ENCODE measurements at regions of chr11 and their contacts with region 1.

Region 1: GRCh38 chr11:6635082-6635932 is 16.1 kb upstream of the TPP1 start:
- DNase-seq: no peak
- ATAC-seq: no peak
- H3K4me3 ChIP-seq: no peak overlapping the region
- H3K27ac ChIP-seq: peak overlapping the region in 1 of 2 experiments; percentile 28; a peak in 1 of 6 replicates
- H3K4me1 ChIP-seq: peaks cover 5% of the 10 kb centered on the region; the same call in 1 of the 3 replicates
- CTCF ChIP-seq: no peak
- EP300 ChIP-seq: no peak
- POLR2A ChIP-seq: no peak
- RAD21 ChIP-seq: no peak

Region 2: DNA sequence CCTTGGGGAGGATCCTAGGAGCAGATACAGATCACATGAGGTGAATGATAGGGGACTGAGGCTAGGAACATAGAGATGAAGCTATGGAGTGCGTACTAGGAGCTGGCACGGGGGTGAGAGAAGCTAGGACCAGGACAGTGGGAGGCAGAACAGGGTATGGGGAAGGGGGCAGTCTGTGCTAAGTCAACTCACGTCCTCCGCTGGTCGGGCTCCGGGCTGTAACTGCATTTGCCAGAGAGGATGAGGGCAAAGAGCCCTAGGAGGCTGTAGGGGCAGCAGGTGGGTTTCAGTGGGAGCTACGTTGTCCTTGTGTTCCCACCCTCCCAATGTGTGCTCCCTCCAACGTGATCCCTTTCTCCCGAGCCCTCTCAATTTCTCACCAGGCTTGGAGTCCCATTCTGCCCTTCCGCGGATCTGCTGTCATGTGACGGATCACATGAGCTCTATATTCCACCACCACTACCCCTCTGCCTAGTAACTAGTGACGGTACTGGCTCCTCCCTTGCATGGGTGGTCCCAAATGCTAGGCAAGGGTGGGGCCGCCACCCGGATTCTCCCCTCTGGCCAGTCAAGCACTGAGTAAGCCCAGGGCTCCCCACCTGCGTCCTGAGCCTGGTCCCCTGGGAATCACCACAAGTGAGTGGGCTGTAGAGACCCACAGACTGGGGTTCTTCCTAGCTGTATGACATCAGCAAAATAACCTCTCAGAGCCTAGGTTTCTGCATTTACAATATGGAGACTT is 16.1 kb before region 1 on chr11 and contains the start of gene TPP1:
- CTCF ChIA-PET with region 1: interaction called, 15 read pairs
- POLR2A ChIA-PET with region 1: no interaction called
- DNase-seq: peak; percentile 94 to 99
- ATAC-seq: peak; percentile 92 to 99
- H3K4me3 ChIP-seq: peak within 1 kb of the TSS; percentile 70
- H3K27ac ChIP-seq: peak within 1 kb of the TSS; percentile 80 to 90
- H3K4me1 ChIP-seq: peaks cover 12% of the 10 kb centered on the region; the same call in 2 of the 3 replicates
- CTCF ChIP-seq: no peak
- EP300 ChIP-seq: no peak
- POLR2A ChIP-seq: peak; percentile 69
- RAD21 ChIP-seq: no peak
- polyA plus RNA-seq, gene TPP1: 53.2 and 63.0 TPM in 2 replicates

Region 3: GRCh38 chr11:6778518-6778917 is 143.2 kb after region 1 on chr11:
- CTCF ChIA-PET with region 1: no interaction called
- POLR2A ChIA-PET with region 1: no interaction called
- DNase-seq: no peak
- ATAC-seq: no peak
- H3K4me3 ChIP-seq: no peak overlapping the region
- H3K27ac ChIP-seq: no peak overlapping the region
- H3K4me1 ChIP-seq: no peaks in the 10 kb centered on the region
- CTCF ChIP-seq: no peak
- EP300 ChIP-seq: no peak
- POLR2A ChIP-seq: no peak
- RAD21 ChIP-seq: no peak